ENCODE measurements at regions of chr10 and their contacts with region 1.

Region 1: DNA sequence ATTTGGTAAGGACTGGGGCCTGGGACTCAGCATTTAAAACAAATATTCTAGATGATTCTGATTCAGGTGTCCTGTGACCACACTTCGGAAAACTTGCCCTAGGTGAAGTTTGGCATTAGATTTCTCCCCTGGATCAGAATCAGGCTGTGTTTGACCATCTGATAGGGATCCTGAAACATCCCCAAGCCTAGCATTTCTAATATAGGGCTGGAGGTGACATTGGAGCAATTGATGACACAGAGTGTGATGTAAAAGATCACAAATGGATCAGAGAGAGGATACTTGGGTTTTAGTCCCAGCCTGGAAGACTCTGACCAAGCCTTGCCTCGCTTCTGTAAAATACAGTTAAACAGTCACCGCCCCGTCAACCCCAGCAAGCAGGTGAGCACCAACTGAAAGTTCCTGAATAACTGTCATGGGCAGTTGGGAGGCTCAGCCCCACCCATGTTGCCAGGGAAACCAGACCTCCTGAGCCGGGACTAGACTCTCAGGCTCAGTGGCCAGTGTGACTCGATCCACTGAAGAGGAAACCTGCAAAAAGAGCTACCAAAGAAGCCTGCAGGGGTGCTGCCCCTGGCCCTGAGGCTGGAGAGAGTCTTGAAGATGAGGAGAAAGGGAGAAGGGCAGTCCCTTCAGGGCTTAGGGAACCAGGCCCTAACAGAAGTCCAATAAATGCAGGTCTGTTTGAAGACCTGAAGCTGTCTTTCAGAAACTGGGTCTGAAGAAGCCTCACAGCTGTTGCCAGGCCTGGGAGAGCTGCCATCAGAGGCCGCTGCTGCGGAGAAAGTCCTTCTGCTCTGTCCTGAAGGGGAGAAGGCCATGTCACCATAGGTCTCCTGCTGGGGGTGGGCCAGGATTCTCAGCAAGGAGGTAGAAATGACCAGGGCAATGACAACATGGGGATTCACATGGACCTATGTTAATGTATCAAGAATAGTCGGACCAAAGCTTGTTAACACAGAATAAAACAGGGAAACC is 126.1 kb upstream of the KCNMA1 start:
- DNase-seq: no peak
- H3K4me3 ChIP-seq: no peak overlapping the region
- CTCF ChIP-seq: no peak

Region 2: GRCh38 chr10:77715088-77715487 is 48.7 kb before region 1 on chr10:
- in situ Hi-C with region 1: loop called (anchors 5 kb)
- DNase-seq: no peak
- H3K4me3 ChIP-seq: no peak overlapping the region
- CTCF ChIP-seq: no peak